ENCODE measurements at regions of chr6 and their contacts with region 1.

Region 1: DNA sequence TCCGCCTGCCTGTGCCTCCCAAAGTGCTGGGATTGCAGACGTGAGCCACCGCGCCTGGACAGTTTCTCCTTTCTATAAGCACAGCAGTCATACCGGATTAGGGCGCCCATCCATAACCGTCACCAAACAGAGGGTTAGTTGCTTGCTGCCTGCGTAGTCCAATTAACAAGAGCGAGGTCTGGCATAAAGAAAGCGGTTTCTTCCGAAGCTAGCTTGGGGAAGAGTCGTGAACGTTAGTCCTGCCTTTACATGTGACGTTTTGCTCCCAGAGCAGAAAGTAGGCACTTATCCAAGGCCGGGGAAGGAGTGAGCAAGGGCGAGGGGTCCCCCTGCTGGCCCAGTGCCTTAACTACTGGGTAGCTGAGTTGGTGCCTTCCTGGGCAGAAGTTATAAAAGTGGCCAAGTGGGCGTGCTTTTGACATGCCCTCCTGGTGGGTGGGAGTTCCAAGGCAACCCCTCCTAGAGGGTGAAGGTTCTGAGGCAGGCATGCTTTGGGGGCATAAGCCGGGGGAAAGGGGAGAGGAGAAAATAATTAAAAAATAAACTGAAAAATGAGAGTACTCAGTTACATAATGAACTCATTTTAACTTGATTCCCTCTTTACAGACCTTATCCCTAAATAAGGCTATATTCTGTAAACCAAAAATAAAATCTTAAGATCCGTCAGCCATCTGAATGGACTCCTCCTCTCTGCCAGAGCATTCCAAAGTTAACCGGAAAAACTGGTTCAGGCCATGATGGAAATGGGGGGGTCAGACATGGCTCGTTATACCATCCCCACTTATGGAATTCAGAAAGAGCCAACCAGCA is 88.0 kb downstream of the FAM217A start:
- DNase-seq: peak; percentile 85 to 91
- ATAC-seq: peak; percentile 92 to 98 (median 95)
- H3K4me3 ChIP-seq: peak overlapping the region; percentile 63
- H3K27ac ChIP-seq: peak overlapping the region; percentile 53
- H3K4me1 ChIP-seq: peaks cover 17% of the 10 kb centered on the region
- H3K27me3 ChIP-seq: no peaks in the 10 kb centered on the region
- CTCF ChIP-seq: peak; percentile 72

Region 2: GRCh38 chr6:3813150-3813780 is 177.6 kb before region 1 on chr6:
- intact Hi-C with region 1: no loop called
- DNase-seq: peak; percentile 70 to 82
- ATAC-seq: peak; percentile 89 to 94 (median 92)
- H3K4me3 ChIP-seq: peak overlapping the region; percentile 40
- H3K27ac ChIP-seq: peak overlapping the region; percentile 51
- H3K4me1 ChIP-seq: peaks cover 32% of the 10 kb centered on the region
- H3K27me3 ChIP-seq: no peaks in the 10 kb centered on the region
- CTCF ChIP-seq: peak; percentile 6

Region 3: GRCh38 chr6:3848925-3849605 is 141.8 kb before region 1 on chr6 and contains the start of gene FAM50B:
- intact Hi-C with region 1: loop called (anchors 5 to 10 kb)
- DNase-seq: peak; percentile 93 to 97
- ATAC-seq: peak; percentile 93 to 99 (median 94)
- H3K4me3 ChIP-seq: peak within 1 kb of the TSS; percentile 66
- H3K27ac ChIP-seq: peak within 1 kb of the TSS; percentile 82
- H3K4me1 ChIP-seq: no peaks in the 10 kb centered on the region
- H3K27me3 ChIP-seq: no peaks in the 10 kb centered on the region
- CTCF ChIP-seq: peak; percentile 93
- total RNA-seq, gene FAM50B: 10.8 to 19.6 (median 12.4) TPM

Region 4: DNA sequence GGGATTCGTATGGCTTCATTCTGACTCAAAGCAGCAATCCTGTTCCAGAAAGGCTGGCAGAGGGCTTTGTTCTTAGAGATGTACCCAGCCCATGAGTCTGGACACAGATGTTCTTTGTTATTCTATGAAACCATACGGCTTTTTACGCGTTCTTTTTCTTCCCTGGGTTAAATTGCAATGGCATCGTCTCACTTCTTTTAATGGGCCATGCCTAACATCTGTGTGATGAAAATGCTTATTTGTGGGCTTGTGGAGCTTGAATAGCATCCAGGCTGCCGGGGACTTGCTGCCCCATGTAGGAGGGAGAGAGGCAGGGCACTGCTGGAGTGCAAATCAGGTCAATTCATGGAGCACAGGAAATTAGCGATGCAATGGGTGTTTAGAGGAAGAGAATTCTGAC is 122.4 kb before region 1 on chr6:
- intact Hi-C with region 1: no loop called
- DNase-seq: no peak
- ATAC-seq: peak in 1 of 4 donors; percentile 41
- H3K4me3 ChIP-seq: no peak overlapping the region
- H3K27ac ChIP-seq: no peak overlapping the region
- H3K4me1 ChIP-seq: no peaks in the 10 kb centered on the region
- H3K27me3 ChIP-seq: no peaks in the 10 kb centered on the region
- CTCF ChIP-seq: no peak

Region 5: DNA sequence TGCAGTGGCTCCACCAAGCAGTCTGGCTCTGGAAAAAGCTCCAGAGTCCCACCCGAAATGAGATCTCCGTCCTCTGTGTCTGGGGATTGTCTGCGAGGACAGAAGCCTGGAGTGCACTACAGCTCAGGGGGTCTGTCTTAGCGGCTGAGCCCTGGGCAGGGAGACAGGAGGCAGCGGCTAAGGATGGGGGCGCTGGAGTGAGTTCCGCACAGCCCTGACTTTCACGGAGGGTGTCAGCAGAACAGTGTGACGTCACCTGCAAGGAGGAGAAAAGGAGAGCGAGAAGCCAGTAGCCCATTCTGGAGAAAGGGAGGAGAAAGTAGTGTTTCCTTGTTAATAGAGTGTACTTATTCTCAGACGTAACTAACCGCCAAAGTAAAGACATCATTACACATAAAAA is 44.1 kb before region 1 on chr6:
- intact Hi-C with region 1: loop called in 1 of 2 experiments (anchors 5 kb)
- DNase-seq: no peak
- ATAC-seq: no peak
- H3K4me3 ChIP-seq: no peak overlapping the region
- H3K27ac ChIP-seq: no peak overlapping the region
- H3K4me1 ChIP-seq: peaks cover 4% of the 10 kb centered on the region
- H3K27me3 ChIP-seq: peaks cover 0 to 5% (median 0%) of the 10 kb centered on the region in 3 donors
- CTCF ChIP-seq: no peak

Measured in psoas muscle (tissue), 8 donors.